HAP-1 (cell line): ENCODE measurements at regions of chr19 and their contacts with region 1.

Region 1: DNA sequence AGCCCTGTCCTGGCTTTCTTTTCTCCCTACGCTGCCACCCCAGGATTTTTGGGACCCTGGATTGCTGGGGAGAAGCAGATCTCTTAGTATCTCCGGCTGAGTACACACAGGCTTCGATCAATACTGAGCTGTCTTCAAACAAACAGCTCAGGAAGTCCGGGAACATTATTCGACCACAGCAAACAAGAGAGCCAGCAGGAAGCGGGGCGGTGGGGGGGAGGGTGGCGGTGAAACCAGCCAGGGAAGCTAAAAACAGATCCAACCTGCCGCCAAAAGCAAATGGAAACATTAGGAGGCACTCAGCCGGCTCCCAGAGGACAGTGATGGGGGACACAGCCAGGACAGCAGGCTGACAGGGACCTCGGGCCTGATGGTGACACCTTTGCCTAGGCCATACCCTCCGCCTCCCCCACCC is 12.2 kb upstream of the BCAM start:
- DNase-seq: no peak
- H3K4me3 ChIP-seq: no peak overlapping the region
- H3K4me1 ChIP-seq: no peaks in the 10 kb centered on the region; the same call in 1 of the 2 replicates
- H3K27me3 ChIP-seq: no peaks in the 10 kb centered on the region

Region 2: DNA sequence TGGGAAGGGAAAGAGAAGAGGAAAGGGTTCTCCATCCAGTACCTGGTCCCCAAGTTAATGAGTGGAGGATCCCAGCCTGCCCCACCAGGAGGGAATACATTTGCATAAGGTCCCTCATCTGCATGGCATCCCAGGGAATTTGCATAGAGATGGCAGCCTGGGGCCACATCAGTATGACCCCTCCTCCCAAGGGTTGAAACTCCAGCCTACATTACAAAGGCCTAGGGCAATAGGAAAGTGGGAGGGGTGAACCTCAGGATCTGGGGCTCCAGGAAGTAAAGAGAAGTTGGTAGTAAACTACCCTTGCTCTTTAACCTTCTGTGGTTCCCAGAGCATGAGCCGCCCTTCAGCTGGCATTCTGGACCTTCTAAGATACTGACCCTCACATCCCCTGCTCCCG is 42.6 kb after region 1 on chr19:
- in situ Hi-C with region 1: loop called (anchors 5 kb)
- DNase-seq: no peak
- H3K4me3 ChIP-seq: no peak overlapping the region
- H3K4me1 ChIP-seq: no peaks in the 10 kb centered on the region; the same call in 1 of the 2 replicates
- H3K27me3 ChIP-seq: no peaks in the 10 kb centered on the region; the same call in 1 of the 2 replicates

Region 3: GRCh38 chr19:44850641-44851109 is 54.0 kb after region 1 on chr19:
- in situ Hi-C with region 1: no loop called
- DNase-seq: no peak
- H3K4me3 ChIP-seq: no peak overlapping the region
- H3K4me1 ChIP-seq: peaks cover 14% of the 10 kb centered on the region
- H3K27me3 ChIP-seq: no peaks in the 10 kb centered on the region

Region 4: DNA sequence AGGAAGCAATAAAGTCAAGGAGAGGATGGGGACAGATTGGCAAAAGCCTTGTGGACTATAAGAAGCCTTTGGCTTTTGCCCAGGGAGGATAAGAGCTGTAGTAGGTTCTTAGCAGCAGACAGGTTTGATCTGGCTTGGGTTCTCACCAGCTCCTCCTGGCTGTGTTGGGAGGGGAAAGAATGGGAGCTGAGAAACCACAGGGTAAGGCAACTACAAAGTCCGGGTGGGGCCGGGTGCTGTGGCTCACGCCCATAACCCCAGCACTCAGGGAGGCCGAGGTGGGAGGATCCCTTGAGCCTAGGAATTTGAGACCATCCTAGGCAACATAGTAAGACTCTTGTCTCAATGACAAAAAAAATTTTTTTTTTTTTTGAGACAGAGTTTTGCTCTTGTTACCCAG is 70.0 kb after region 1 on chr19:
- in situ Hi-C with region 1: no loop called
- DNase-seq: no peak
- H3K4me3 ChIP-seq: no peak overlapping the region
- H3K4me1 ChIP-seq: no peaks in the 10 kb centered on the region
- H3K27me3 ChIP-seq: no peaks in the 10 kb centered on the region

Region 5: GRCh38 chr19:45234089-45234869 is 437.6 kb after region 1 on chr19:
- in situ Hi-C with region 1: no loop called
- DNase-seq: no peak
- H3K4me3 ChIP-seq: no peak overlapping the region
- H3K4me1 ChIP-seq: no peaks in the 10 kb centered on the region
- H3K27me3 ChIP-seq: no peaks in the 10 kb centered on the region